Activated naive CD4-positive, alpha-beta T cell treated with anti-CD3 and anti-CD28 coated beads for 36 hours (primary cell): ENCODE measurements at regions of chr2 and their contacts with region 1.

Region 1: DNA sequence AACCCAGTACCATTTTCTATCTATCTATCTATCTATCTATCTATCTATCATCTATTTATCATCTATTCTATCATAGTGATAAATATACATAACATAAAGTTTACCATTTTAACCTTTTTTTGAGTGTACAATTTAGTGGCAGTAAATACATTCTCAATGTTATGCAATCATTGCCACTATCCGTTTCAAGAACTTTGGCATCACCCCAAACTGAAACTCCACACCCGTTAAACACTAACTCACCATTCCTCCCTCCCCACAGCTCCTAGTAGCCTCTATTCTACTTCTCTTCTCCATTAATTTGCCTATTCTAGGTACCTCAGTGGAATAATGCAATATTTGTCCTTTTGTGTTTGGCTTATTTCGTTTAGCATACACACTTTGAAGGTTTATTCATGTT is 82.5 kb upstream of the KCNE4 start:
- DNase-seq: no peak
- H3K4me3 Mint-ChIP-seq: no peak overlapping the region
- H3K27ac Mint-ChIP-seq: no peak overlapping the region
- H3K4me1 Mint-ChIP-seq: no peaks in the 10 kb centered on the region
- H3K27me3 Mint-ChIP-seq: peaks cover 4% of the 10 kb centered on the region

Region 2: DNA sequence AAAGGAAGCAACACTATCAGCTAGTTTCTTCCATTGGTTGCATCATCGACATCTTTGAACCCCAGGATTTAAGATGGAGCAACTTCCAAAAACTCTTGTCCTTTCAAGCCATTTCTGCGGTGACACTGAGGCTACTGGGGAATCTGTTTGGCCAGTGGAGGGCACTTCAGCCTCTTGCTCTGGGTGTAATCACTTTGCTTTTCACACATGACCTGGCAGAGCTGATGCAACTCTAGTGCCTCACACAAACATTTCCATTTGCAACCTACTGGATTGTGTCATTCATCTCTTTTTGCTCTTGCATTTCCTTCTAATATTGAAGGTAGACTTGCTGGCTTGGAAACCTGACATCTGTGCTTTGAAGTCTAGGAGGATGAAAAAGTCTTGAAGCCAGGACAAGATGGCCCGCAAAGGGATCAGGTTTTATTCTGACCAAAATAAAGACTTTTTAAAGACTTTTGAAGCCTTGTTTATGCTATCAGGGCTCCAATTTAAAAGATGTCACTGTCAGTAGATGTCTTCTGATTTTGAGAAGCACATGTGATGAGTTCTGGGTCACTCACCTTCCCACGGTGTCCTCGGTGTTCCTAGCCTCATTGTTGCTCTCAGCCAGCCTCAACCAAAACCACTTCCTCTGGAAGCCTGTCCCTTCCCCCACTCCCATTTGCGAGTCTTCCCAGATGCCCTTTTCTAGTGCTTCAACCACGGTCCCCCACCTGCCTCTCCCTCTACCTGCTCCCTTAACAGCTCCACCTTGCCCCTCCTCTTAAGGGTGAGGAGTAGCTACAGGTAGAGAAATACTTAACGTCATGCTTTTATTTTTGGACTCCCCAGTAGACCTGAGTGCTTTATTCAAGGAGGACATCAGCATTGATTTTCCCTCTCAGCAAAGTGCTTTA is 12.8 kb after region 1 on chr2:
- CTCF ChIA-PET with region 1: interaction called, 11 read pairs
- intact Hi-C with region 1: no loop called
- DNase-seq: peak; percentile 45
- H3K4me3 Mint-ChIP-seq: no peak overlapping the region
- H3K27ac Mint-ChIP-seq: no peak overlapping the region
- H3K4me1 Mint-ChIP-seq: peaks cover 12% of the 10 kb centered on the region
- H3K27me3 Mint-ChIP-seq: peaks cover 24% of the 10 kb centered on the region

Region 3: DNA sequence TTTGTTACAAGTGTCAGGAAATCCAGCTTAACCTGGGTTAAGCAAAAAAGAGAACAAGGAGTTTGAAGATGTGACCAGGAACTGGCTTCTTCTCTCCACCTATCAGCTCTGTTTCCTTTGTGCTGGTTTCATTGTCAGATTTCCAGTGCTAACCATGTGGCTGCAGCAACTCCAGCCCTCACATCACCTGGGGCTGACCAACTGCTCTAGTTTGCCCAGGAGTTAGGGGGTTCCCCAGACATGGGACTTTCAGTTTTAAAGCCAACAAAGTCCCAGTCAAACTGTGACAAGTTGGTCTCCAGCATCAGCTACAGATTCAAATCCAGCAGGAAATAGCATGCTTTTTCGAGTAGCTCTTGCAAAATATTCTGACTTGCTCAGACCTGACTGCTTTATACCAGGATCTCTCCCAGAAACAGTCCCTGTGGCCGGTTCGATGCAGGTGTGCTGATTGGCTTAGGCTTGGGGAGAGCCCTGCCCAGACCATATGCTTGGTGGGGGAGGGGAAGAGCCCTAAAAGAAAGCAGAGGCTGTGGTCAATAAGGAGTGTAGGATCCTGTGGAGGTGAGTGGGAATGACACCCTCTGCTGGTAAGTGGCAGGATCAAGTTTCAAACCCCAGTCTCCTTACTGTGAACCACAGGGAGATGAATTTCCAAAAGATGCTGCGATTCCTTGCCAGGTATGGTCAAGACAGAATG is 132.0 kb after region 1 on chr2:
- CTCF ChIA-PET with region 1: no interaction called
- intact Hi-C with region 1: loop called (anchors 1 kb)
- DNase-seq: no peak
- H3K4me3 Mint-ChIP-seq: no peak overlapping the region
- H3K27ac Mint-ChIP-seq: no peak overlapping the region
- H3K4me1 Mint-ChIP-seq: no peaks in the 10 kb centered on the region
- H3K27me3 Mint-ChIP-seq: peaks cover 3% of the 10 kb centered on the region

Region 4: GRCh38 chr2:223306371-223306770 is 336.9 kb after region 1 on chr2:
- CTCF ChIA-PET with region 1: no interaction called
- intact Hi-C with region 1: loop called (anchors 5 kb)
- DNase-seq: peak; percentile 15
- H3K4me3 Mint-ChIP-seq: no peak overlapping the region
- H3K27ac Mint-ChIP-seq: no peak overlapping the region
- H3K4me1 Mint-ChIP-seq: no peaks in the 10 kb centered on the region
- H3K27me3 Mint-ChIP-seq: no peaks in the 10 kb centered on the region

Region 5: GRCh38 chr2:223338016-223338415 is 368.5 kb after region 1 on chr2:
- CTCF ChIA-PET with region 1: no interaction called
- intact Hi-C with region 1: no loop called
- DNase-seq: no peak
- H3K4me3 Mint-ChIP-seq: no peak overlapping the region
- H3K27ac Mint-ChIP-seq: no peak overlapping the region
- H3K4me1 Mint-ChIP-seq: no peaks in the 10 kb centered on the region
- H3K27me3 Mint-ChIP-seq: no peaks in the 10 kb centered on the region

Region 6: GRCh38 chr2:223601932-223602666 is 632.6 kb after region 1 on chr2 and contains the start of gene SCG2:
- CTCF ChIA-PET with region 1: no interaction called
- intact Hi-C with region 1: loop called (anchors 1 kb)
- DNase-seq: peak; percentile 61
- H3K4me3 Mint-ChIP-seq: no peak within 1 kb of the TSS
- H3K27ac Mint-ChIP-seq: no peak within 1 kb of the TSS
- H3K4me1 Mint-ChIP-seq: peaks cover 3% of the 10 kb centered on the region
- H3K27me3 Mint-ChIP-seq: peaks cover 12% of the 10 kb centered on the region
- total RNA-seq, gene SCG2: not detected

Region 7: DNA sequence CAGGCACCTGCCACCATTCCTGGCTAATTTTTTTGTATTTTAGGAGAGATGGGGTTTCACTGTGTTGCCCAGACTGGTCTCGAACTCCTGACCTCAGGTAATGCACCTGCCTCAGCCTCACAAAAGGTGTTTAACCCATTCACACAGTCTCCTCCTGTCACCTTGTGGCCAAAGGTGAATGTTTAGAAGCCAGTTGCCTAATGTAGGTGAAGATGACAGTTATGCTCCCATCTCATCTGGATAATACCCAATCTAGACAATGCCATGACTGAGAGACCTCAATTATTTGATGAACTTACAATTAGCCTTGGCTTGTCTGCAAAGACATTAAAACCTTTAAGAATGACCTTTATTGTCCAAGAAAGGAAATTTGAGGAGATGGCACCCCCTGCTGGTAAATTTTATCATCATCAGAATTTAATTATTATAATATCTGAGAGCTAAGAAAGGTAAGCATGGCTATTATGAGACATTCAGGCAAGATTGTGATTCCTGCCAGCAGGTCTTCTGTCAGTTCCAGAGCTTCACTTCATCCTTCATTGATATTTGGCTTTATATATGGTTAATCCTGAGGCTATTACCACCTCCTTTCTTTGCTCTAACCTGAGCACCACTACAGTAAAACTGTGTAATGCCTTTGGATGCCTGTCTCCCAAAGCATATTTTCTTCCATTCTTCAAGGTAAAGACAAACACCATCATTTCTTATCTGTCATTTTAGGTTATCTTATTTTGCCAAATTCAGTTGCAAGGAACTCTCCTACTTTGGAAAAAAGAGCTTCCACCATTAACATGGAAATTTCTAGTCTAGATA is 1314.8 kb after region 1 on chr2:
- CTCF ChIA-PET with region 1: no interaction called
- intact Hi-C with region 1: loop called (anchors 1 kb)
- DNase-seq: peak; percentile 50
- H3K4me3 Mint-ChIP-seq: no peak overlapping the region
- H3K27ac Mint-ChIP-seq: no peak overlapping the region
- H3K4me1 Mint-ChIP-seq: no peaks in the 10 kb centered on the region
- H3K27me3 Mint-ChIP-seq: peaks cover 25% of the 10 kb centered on the region